Heart left ventricle (tissue), 16 donors: ENCODE measurements at regions of chr7 and their contacts with region 1.

Region 1: DNA sequence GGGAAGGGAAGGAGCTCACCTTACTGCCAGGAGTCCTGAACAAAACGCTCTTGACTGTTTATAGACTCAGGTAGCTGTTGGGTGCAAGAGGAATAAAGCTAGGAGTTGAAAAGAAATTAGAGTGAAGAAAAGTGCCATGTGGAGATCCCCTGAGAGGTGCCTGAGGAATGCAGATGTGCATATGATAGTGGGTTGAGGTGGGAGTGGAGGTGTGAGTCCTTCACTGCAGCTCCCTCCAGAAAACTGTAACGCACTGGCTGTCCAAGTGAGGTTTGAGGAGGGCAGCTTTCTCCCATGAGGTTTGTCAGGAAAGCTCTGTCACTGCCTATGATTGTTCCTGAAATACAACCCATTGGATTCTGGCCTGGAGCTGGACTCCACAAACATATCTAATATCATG is 904.8 kb upstream of the POT1 start:
- DNase-seq: no peak
- ATAC-seq: no peak
- H3K4me3 ChIP-seq: no peak overlapping the region
- H3K27ac ChIP-seq: no peak overlapping the region
- H3K4me1 ChIP-seq: no peaks in the 10 kb centered on the region
- H3K27me3 ChIP-seq: no peaks in the 10 kb centered on the region
- CTCF ChIP-seq: no peak
- POLR2A ChIP-seq: no peak

Region 2: DNA sequence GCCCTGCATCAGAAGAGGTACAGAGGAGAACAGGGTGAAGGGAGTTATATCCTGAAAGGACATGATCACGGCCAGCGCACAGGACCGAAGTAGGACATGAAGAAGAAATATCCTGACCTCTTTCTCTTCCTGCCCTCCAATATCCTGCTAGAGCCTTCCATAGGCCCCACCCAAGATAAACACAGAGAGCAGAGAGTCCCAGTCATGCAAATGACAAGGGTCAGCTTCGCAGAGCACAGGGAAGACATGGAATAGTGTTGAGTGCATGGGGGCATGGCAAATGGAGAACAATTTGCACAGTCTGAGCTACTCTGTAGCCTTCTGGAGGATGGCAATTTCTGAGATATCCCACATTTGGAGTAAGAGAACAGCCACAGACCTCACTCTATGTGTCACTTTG is 1046.9 kb after region 1 on chr7:
- intact Hi-C with region 1: loop called in 1 of 10 experiments (anchors 10 kb)
- DNase-seq: no peak
- ATAC-seq: no peak
- H3K4me3 ChIP-seq: no peak overlapping the region
- H3K27ac ChIP-seq: no peak overlapping the region
- H3K4me1 ChIP-seq: no peaks in the 10 kb centered on the region
- H3K27me3 ChIP-seq: no peaks in the 10 kb centered on the region
- CTCF ChIP-seq: no peak
- POLR2A ChIP-seq: no peak